ENCODE measurements at regions of chr12 and their contacts with region 1.

Region 1: DNA sequence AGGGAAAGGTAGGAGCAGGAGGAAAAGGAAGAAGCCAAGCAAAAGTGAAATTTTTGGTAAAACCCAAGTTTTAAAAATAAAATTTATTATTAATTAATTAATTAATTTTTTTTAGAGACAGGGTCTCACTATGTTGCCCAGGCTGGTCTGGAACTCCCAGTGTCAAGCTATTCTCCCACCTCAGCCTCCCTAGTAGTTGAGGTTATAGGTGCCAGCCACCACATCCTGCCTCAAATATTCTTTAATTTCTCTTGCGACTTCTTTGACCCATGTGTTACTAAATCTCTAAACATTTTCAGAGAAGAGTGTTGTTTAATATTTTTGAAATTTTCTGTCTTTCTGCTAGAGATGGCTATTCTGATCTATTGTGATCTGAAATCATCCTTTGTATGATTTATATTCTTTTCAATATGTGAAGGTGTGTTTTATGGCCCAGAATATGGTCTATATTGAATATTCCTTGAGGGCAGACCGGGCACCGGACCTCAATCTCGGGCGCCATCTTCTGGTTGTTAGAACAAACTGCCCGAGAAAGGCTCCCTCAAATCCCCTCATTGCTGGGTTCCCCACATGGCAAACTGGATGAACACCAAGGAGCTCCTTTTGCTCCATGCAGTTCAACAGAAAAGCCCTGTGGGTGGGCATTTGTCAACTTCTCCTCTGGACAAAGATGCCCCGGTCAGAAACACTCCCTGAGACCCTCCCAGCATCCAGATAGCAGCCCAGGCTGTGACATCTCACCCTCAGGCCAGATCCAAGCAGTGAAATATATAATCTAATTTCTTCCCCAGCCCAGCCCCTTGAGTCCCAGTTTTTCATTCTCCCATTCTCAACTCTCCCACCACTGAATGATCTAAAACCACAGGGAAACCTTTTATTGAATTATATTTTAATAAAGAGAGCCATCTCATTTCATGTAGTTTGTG is 110.5 kb downstream of the ASCL4 start:
- DNase-seq: peak; percentile 41
- ATAC-seq: peak; percentile 96
- H3K4me3 ChIP-seq: no peak overlapping the region
- H3K27ac ChIP-seq: no peak overlapping the region
- H3K4me1 ChIP-seq: no peaks in the 10 kb centered on the region; a peak in 1 of 4 replicates
- H3K27me3 ChIP-seq: peaks cover 43% of the 10 kb centered on the region
- CTCF ChIP-seq: peak; percentile 79 to 86 (median 83)
- POLR2A ChIP-seq: no peak
- RAD21 ChIP-seq: peak; percentile 83

Region 2: GRCh38 chr12:107131832-107132616 is 753.0 kb before region 1 on chr12:
- CTCF ChIA-PET with region 1: interaction called, 3 read pairs
- POLR2A ChIA-PET with region 1: no interaction called
- RAD21 ChIA-PET with region 1: no interaction called
- intact Hi-C with region 1: loop called (anchors 2 kb)
- DNase-seq: peak; percentile 44
- ATAC-seq: peak; percentile 78
- H3K4me3 ChIP-seq: no peak overlapping the region
- H3K27ac ChIP-seq: no peak overlapping the region
- H3K4me1 ChIP-seq: peaks cover 0 to 9% of the 10 kb centered on the region in 2 experiments; a peak in 2 of 4 replicates
- H3K27me3 ChIP-seq: no peaks in the 10 kb centered on the region
- CTCF ChIP-seq: peak; percentile 82 to 96 (median 92)
- POLR2A ChIP-seq: no peak
- RAD21 ChIP-seq: peak; percentile 97

Region 3: GRCh38 chr12:107670999-107671643 is 213.9 kb before region 1 on chr12:
- CTCF ChIA-PET with region 1: interaction called, 32 read pairs
- POLR2A ChIA-PET with region 1: no interaction called
- RAD21 ChIA-PET with region 1: interaction called in 1 of 2 experiments, 5 read pairs
- intact Hi-C with region 1: loop called (anchors 1 kb)
- DNase-seq: peak; percentile 19
- ATAC-seq: peak; percentile 95
- H3K4me3 ChIP-seq: no peak overlapping the region
- H3K27ac ChIP-seq: no peak overlapping the region
- H3K4me1 ChIP-seq: peaks cover 0 to 5% of the 10 kb centered on the region in 2 experiments; a peak in 3 of 4 replicates
- H3K27me3 ChIP-seq: no peaks in the 10 kb centered on the region
- CTCF ChIP-seq: peak; percentile 30 to 93 (median 92); a peak in 5 of 6 replicates
- POLR2A ChIP-seq: no peak
- RAD21 ChIP-seq: peak; percentile 27

Region 4: DNA sequence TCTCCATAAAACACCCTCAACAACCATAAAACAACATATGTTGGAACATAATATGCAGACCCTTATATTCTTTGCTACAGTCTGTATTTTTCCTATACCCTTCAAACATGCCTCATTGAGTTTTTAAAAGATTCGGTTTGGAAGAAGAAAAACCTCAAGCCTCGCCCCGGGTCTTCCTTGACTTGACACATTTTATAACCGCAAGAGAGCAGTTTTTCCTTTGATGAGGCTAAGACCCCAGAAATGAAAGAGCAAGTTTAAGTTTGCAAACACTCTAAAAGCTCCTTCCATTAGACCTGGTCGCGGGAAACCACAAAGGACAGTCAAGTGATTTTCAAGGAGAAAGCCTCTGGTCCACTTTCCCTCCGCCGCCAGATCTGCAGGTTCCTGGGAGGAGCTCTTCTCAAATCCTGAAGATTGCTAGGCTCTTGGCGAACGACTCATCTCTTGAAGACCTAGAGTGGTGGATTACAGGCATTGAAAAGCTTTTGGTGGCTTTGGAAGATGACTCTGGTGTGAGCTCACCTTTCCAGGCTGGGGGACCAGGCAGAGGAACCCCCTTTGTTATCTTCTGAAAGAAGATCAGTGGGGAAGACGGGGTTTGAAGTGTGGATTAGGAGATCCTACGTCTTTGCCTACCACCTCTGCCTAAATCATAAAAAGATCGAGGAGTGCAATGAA is 110.5 kb before region 1 on chr12 and contains the start of gene ASCL4:
- CTCF ChIA-PET with region 1: no interaction called
- POLR2A ChIA-PET with region 1: no interaction called
- RAD21 ChIA-PET with region 1: no interaction called
- intact Hi-C with region 1: loop called (anchors 2 kb)
- DNase-seq: no peak
- ATAC-seq: no peak
- H3K4me3 ChIP-seq: no peak within 1 kb of the TSS
- H3K27ac ChIP-seq: no peak within 1 kb of the TSS
- H3K4me1 ChIP-seq: no peaks in the 10 kb centered on the region
- H3K27me3 ChIP-seq: peaks cover 31% of the 10 kb centered on the region
- CTCF ChIP-seq: no peak
- POLR2A ChIP-seq: no peak
- RAD21 ChIP-seq: no peak
- total RNA-seq, gene ASCL4: not detected

Region 5: DNA sequence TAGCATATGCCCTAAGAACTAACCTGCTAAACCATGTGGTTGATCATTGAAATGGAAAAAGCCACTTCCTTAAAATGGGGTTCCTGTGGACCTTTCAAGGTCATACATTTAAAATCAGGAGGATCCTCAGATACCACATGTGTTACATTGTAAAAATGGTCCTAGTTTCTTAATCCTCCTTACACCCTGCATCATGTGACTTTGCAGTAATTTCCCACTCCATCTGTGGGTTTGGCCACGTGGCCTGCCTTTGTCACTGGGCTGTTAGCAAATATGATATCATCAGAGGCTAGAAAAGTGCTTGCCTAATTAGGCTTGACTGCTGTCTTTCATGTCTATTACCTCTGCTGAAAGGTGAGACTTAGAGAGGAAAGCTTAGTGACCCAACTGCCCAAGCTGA is 383.4 kb after region 1 on chr12:
- CTCF ChIA-PET with region 1: no interaction called
- POLR2A ChIA-PET with region 1: no interaction called
- RAD21 ChIA-PET with region 1: no interaction called
- intact Hi-C with region 1: no loop called
- DNase-seq: no peak
- ATAC-seq: no peak
- H3K4me3 ChIP-seq: no peak overlapping the region
- H3K27ac ChIP-seq: no peak overlapping the region
- H3K4me1 ChIP-seq: no peaks in the 10 kb centered on the region
- H3K27me3 ChIP-seq: peaks cover 62% of the 10 kb centered on the region
- CTCF ChIP-seq: no peak
- POLR2A ChIP-seq: no peak
- RAD21 ChIP-seq: no peak

Region 6: GRCh38 chr12:108640802-108641445 is 755.9 kb after region 1 on chr12:
- CTCF ChIA-PET with region 1: no interaction called
- POLR2A ChIA-PET with region 1: no interaction called
- RAD21 ChIA-PET with region 1: no interaction called
- intact Hi-C with region 1: no loop called
- DNase-seq: no peak
- ATAC-seq: peak; percentile 23
- H3K4me3 ChIP-seq: no peak overlapping the region
- H3K27ac ChIP-seq: no peak overlapping the region
- H3K4me1 ChIP-seq: peaks cover 46 to 67% of the 10 kb centered on the region in 2 experiments
- H3K27me3 ChIP-seq: no peaks in the 10 kb centered on the region
- CTCF ChIP-seq: no peak
- POLR2A ChIP-seq: no peak
- RAD21 ChIP-seq: no peak

Measured in HCT116 (cell line).